Right ventricle myocardium inferior (tissue), 1 donor: ENCODE measurements at regions of chr1 and their contacts with region 1.

Region 1: GRCh38 chr1:81493102-81493869 is 307.4 kb upstream of the ADGRL2 start:
- DNase-seq: no peak
- ATAC-seq: peak; percentile 88

Region 2: GRCh38 chr1:81314513-81315233 is 178.6 kb before region 1 on chr1:
- intact Hi-C with region 1: loop called (anchors 5 kb)
- DNase-seq: no peak
- ATAC-seq: peak; percentile 61

Region 3: GRCh38 chr1:81559662-81560350 is 66.5 kb after region 1 on chr1:
- intact Hi-C with region 1: no loop called
- DNase-seq: no peak
- ATAC-seq: no peak